Vagina (tissue), 2 donors: ENCODE measurements at regions of chr15 and their contacts with region 1.

Region 1: DNA sequence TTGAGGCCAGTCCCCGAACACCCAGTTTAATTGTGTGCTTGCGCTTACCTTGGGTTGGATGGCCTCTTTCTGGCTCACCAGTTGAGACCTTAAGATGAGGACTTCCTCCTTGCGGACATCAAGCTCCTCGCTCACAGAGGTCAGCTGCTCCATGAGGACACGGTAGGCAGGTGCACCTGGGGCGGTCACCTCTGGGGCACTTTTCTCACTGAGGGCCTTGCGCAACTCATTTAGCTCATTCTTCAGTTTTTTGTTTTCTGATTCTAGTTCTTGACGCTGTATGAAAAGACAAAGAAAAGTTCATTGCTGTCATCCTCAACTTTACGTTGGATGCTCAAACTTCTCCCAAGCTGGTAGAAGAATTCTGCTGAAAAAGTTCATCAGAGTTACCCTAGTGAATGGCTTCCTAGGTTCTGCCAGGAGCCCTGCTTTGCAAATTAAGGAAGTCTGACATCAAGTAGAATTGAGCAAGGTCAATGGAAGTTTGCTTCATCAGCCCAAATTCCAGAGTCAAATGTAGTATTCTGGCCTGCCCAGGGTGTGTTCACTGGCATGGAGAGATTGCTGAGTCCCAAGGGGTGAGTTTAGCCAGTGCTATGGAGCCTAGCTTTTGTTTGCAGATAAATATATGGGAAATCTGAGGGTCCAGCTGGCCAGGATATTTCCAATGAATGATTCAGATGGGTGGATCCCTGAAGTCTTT is 55.8 kb upstream of the MYO5C start:
- DNase-seq: no peak
- H3K4me3 ChIP-seq: no peak overlapping the region
- H3K27ac ChIP-seq: no peak overlapping the region
- H3K4me1 ChIP-seq: no peaks in the 10 kb centered on the region
- H3K27me3 ChIP-seq: no peaks in the 10 kb centered on the region
- CTCF ChIP-seq: no peak
- POLR2A ChIP-seq: no peak

Region 2: GRCh38 chr15:50613600-50613999 is 1737.8 kb before region 1 on chr15:
- intact Hi-C with region 1: loop called (anchors 10 kb)
- DNase-seq: no peak
- H3K4me3 ChIP-seq: no peak overlapping the region
- H3K27ac ChIP-seq: no peak overlapping the region
- H3K4me1 ChIP-seq: no peaks in the 10 kb centered on the region
- H3K27me3 ChIP-seq: no peaks in the 10 kb centered on the region
- CTCF ChIP-seq: no peak
- POLR2A ChIP-seq: no peak

Region 3: GRCh38 chr15:52137432-52138357 is 213.7 kb before region 1 on chr15:
- intact Hi-C with region 1: no loop called
- DNase-seq: no peak
- H3K4me3 ChIP-seq: no peak overlapping the region
- H3K27ac ChIP-seq: peak overlapping the region; percentile 69
- H3K4me1 ChIP-seq: peaks cover 41% of the 10 kb centered on the region
- H3K27me3 ChIP-seq: no peaks in the 10 kb centered on the region
- CTCF ChIP-seq: no peak
- POLR2A ChIP-seq: no peak

Region 4: GRCh38 chr15:52455412-52455811 is 104.1 kb after region 1 on chr15:
- intact Hi-C with region 1: no loop called
- DNase-seq: no peak
- H3K4me3 ChIP-seq: no peak overlapping the region
- H3K27ac ChIP-seq: no peak overlapping the region
- H3K4me1 ChIP-seq: no peaks in the 10 kb centered on the region
- H3K27me3 ChIP-seq: no peaks in the 10 kb centered on the region
- CTCF ChIP-seq: no peak
- POLR2A ChIP-seq: no peak

Region 5: GRCh38 chr15:52717894-52718293 is 366.5 kb after region 1 on chr15:
- intact Hi-C with region 1: no loop called
- DNase-seq: no peak
- H3K4me3 ChIP-seq: no peak overlapping the region
- H3K27ac ChIP-seq: no peak overlapping the region
- H3K4me1 ChIP-seq: no peaks in the 10 kb centered on the region
- H3K27me3 ChIP-seq: no peaks in the 10 kb centered on the region
- CTCF ChIP-seq: no peak
- POLR2A ChIP-seq: no peak